ENCODE measurements at regions of chr1 and their contacts with region 1.

Region 1: GRCh38 chr1:77582905-77583304 is 99.6 kb downstream of the ZZZ3 start:
- DNase-seq: no peak
- ATAC-seq: no peak
- H3K4me3 ChIP-seq: no peak overlapping the region
- H3K4me3 Mint-ChIP-seq: no peak overlapping the region
- H3K27ac ChIP-seq: no peak overlapping the region
- H3K27ac Mint-ChIP-seq: no peak overlapping the region
- H3K4me1 ChIP-seq: no peaks in the 10 kb centered on the region
- H3K4me1 Mint-ChIP-seq: peaks cover 13% of the 10 kb centered on the region in 3 donors
- H3K27me3 ChIP-seq: no peaks in the 10 kb centered on the region
- H3K27me3 Mint-ChIP-seq: no peaks in the 10 kb centered on the region

Region 2: DNA sequence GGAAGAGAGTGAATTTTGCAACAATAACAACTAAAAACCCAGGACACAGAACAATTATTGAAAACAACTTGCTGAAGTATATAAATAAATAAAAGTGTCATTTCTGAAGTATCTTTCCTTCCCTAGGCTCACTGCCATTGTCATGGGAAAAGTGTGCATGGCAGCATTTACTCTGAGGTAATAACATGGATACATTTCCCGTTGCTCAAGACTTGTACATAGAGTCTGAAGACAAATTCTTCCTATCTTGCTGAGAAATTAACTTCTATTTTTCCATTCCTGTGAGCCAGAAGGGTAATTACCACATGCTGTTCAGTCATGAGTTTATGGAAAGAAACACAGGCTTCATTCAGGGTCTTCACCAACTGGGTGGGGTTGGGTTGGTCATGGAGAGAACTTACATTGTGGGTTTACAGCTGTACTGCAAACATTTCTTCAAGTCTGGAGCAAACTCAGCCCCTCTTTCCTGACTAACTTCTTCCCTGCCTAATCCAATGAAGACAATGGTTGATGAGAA is 1476.1 kb before region 1 on chr1:
- CTCF ChIA-PET with region 1: no interaction called
- POLR2A ChIA-PET with region 1: interaction called in 1 of 2 experiments, 12 read pairs
- DNase-seq: no peak
- ATAC-seq: no peak
- H3K4me3 ChIP-seq: no peak overlapping the region
- H3K4me3 Mint-ChIP-seq: no peak overlapping the region
- H3K27ac ChIP-seq: no peak overlapping the region
- H3K27ac Mint-ChIP-seq: no peak overlapping the region
- H3K4me1 ChIP-seq: peaks cover 0 to 6% of the 10 kb centered on the region in 2 experiments
- H3K4me1 Mint-ChIP-seq: peaks cover 0 to 4% (median under 1%) of the 10 kb centered on the region in 3 donors
- H3K27me3 ChIP-seq: peaks cover 0 to 5% of the 10 kb centered on the region in 2 experiments
- H3K27me3 Mint-ChIP-seq: peaks cover 0 to 16% of the 10 kb centered on the region in 2 donors

Region 3: DNA sequence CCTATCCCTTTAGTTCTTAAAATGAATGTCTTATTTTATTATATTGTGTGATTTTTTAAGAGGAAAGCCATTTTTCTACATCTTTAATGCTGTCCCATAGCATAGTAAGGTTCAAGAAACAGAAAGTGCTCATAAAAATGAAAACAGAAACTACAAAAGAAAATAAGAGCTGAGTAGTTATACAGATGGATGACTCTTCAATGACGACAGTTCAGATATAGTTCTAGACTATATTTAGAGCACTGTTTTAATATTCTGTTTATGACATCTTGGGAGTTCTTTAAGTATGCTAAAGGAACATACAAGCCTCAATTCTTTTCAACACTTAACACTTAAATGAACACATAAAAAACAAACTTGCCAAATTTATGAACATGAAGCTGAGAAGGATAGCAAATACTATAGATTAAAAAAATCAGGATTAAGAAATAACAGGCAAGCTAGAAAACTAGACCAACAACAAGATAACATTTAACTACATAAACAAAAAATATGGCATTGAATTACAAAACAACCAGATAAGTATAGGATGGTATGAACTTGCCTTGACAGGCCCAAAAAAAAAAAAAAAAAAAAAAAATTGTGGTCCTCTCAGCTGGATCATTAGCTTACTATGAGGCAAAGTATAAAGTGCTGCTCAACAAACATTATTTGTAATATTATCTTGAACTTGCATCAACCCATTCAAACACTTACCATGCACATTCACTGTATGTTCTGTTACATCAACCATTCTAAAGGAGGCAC is 11.6 kb after region 1 on chr1:
- CTCF ChIA-PET with region 1: no interaction called
- POLR2A ChIA-PET with region 1: no interaction called
- DNase-seq: no peak
- ATAC-seq: no peak
- H3K4me3 ChIP-seq: no peak overlapping the region
- H3K4me3 Mint-ChIP-seq: no peak overlapping the region
- H3K27ac ChIP-seq: no peak overlapping the region
- H3K27ac Mint-ChIP-seq: peak overlapping the region in 1 of 2 donors; percentile 52
- H3K4me1 ChIP-seq: no peaks in the 10 kb centered on the region
- H3K4me1 Mint-ChIP-seq: peaks cover 31 to 40% (median 39%) of the 10 kb centered on the region in 3 donors
- H3K27me3 ChIP-seq: no peaks in the 10 kb centered on the region
- H3K27me3 Mint-ChIP-seq: no peaks in the 10 kb centered on the region